RWPE1 (cell line): ENCODE measurements at regions of chr10 and their contacts with region 1.

Region 1: DNA sequence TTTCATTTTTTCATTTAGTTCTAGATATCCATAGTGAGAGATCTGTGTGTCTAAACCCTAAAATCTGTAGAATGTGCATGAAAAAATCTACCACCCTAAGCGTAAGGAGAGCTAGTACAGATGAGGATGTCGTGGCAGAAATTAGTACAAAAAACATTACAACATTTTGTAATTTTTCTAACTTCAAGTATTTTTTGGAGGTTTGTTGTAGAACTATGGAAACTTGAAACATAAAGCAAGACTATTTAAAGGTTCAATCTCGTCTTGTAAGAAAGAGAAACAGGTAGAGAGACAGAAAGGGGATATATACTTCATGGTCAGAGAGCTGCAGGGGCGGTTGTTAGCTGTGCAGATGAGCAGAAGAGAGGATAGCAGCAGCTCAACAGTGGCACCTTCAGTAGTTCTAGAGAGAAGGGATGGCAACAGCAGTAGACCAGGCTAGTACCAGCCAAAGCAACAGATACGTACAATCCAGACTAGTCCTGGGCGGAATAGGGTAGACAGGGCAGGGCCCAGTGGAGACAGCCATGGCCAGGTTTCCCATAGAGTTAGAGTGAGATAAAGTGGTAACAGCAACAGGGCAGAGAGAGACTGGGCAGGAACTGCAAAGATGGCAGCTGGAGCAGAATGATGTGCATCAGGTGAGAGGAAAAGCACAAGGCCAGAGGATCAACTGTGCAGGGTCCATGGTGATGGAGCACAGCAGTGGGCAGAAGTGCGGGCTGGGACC is 145.2 kb downstream of the FRMD4A start:
- DNase-seq: peak; percentile 86
- H3K27ac ChIP-seq: peak overlapping the region; percentile 40; the same call in 1 of the 2 replicates
- CTCF ChIP-seq: no peak

Region 2: GRCh38 chr10:14200698-14201544 is 15.4 kb after region 1 on chr10:
- CTCF ChIA-PET with region 1: interaction called, 17 read pairs
- POLR2A ChIA-PET with region 1: no interaction called
- DNase-seq: no peak
- H3K27ac ChIP-seq: no peak overlapping the region
- CTCF ChIP-seq: no peak

Region 3: DNA sequence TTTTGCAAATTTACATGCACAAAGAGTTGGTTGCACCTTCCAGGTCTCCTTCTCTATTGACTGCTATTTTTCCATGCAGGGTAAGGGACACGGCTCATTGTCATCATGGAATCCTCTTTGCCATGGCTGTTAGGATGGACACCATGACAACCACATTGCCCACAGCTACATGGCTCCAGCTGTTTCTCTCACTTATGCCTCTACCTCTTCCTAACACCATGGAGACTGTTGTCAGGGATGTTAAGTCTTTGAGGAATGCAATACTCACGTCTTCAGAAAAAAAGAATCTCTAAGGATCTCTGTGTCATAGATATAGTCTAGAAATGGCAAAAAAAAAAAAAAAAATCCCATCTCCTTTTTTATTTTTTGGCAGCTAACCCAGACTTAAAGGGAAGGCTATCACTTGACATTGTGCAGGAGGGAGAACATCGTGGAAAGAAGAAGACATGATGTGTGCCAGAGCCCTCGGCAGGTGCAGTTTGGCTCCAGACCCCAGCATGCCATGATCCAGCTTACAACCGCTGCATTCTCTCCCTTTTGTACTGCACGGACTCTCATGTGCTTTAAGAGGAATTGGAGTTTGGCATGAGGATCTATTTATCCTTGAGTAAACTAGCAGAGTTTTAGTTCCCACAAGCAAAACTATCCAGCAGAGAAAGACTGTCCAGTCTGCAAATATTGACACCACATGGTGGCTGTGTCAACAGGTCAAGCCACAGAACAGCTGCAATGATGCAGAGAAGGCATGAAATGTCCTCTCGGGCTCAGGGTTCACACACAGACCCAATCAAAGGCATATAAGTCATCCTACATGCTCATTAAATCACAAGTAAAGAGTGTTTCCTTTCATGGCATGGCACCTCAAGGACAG is 74.5 kb after region 1 on chr10:
- CTCF ChIA-PET with region 1: no interaction called
- POLR2A ChIA-PET with region 1: no interaction called
- DNase-seq: no peak
- H3K27ac ChIP-seq: no peak overlapping the region
- CTCF ChIP-seq: no peak